WTC11 (cell line): ENCODE measurements at regions of chr18 and their contacts with region 1.

Region 1: GRCh38 chr18:37346048-37346447 is 219.6 kb downstream of the CELF4 start:
- DNase-seq: no peak
- ATAC-seq: peak; percentile 21; the same call in 1 of the 2 replicates
- H3K4me3 Mint-ChIP-seq: no peak overlapping the region
- H3K27ac Mint-ChIP-seq: no peak overlapping the region
- H3K4me1 Mint-ChIP-seq: peaks cover 31% of the 10 kb centered on the region
- H3K27me3 Mint-ChIP-seq: peaks cover 32% of the 10 kb centered on the region
- CTCF ChIP-seq: no peak

Region 2: DNA sequence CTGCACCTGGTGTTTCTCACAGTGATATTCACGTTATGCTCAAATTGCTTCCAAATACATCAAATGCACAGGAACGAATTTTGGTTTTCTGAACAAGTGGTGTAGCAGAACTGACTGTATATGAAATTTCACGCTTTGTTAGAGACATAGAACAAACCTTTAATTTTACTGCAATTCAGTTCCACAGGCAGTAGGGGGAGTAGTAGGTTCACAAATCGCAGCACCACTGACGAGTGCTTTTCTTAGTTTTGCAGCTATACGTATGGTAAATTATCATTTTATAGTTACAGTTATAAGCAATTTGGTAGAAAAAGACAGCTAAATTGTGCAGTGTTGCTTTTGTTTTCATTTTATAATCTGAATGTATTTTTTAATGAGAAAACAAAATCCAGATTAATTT is 403.8 kb before region 1 on chr18:
- CTCF ChIA-PET with region 1: interaction called, 10 read pairs
- POLR2A ChIA-PET with region 1: no interaction called
- DNase-seq: no peak
- ATAC-seq: peak; percentile 69
- H3K4me3 Mint-ChIP-seq: no peak overlapping the region
- H3K27ac Mint-ChIP-seq: no peak overlapping the region
- H3K4me1 Mint-ChIP-seq: peaks cover 32% of the 10 kb centered on the region
- H3K27me3 Mint-ChIP-seq: no peaks in the 10 kb centered on the region
- CTCF ChIP-seq: peak; percentile 73

Region 3: GRCh38 chr18:37322492-37323035 is 23.5 kb before region 1 on chr18:
- CTCF ChIA-PET with region 1: interaction called, 19 read pairs
- POLR2A ChIA-PET with region 1: no interaction called
- DNase-seq: peak; percentile 73
- ATAC-seq: peak; percentile 85
- H3K4me3 Mint-ChIP-seq: no peak overlapping the region
- H3K27ac Mint-ChIP-seq: no peak overlapping the region
- H3K4me1 Mint-ChIP-seq: peaks cover 10% of the 10 kb centered on the region
- H3K27me3 Mint-ChIP-seq: peaks cover 9% of the 10 kb centered on the region
- CTCF ChIP-seq: peak; percentile 84

Region 4: GRCh38 chr18:37361335-37362157 is 15.5 kb after region 1 on chr18:
- CTCF ChIA-PET with region 1: interaction called, 25 read pairs
- POLR2A ChIA-PET with region 1: no interaction called
- DNase-seq: no peak
- ATAC-seq: peak; percentile 50
- H3K4me3 Mint-ChIP-seq: peak overlapping the region; percentile 43
- H3K27ac Mint-ChIP-seq: no peak overlapping the region
- H3K4me1 Mint-ChIP-seq: peaks cover 26% of the 10 kb centered on the region
- H3K27me3 Mint-ChIP-seq: peaks cover 100% of the 10 kb centered on the region
- CTCF ChIP-seq: no peak

Region 5: DNA sequence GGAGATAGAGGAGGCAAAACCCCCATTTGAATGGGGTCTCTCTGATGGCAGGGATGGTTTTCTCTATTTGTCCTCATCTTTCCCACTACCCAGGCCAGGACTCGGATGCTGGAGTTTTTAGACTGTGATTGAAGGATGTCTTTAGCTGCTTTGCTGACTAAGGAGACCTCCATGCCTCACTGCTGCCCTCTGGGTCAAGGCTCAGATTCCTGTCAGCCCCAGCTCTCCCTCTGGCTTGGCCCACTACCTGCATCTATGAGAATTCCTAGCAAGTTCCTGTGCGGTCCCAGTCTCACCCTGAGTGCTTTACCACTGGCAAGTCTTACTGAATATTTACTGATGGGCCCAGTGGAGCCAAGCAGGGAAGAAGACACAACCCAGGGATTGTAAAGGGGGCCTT is 35.5 kb after region 1 on chr18:
- CTCF ChIA-PET with region 1: interaction called, 14 read pairs
- POLR2A ChIA-PET with region 1: no interaction called
- DNase-seq: peak; percentile 35
- ATAC-seq: peak; percentile 50
- H3K4me3 Mint-ChIP-seq: no peak overlapping the region
- H3K27ac Mint-ChIP-seq: no peak overlapping the region
- H3K4me1 Mint-ChIP-seq: peaks cover 24% of the 10 kb centered on the region
- H3K27me3 Mint-ChIP-seq: peaks cover 11% of the 10 kb centered on the region; the same call in 1 of the 2 replicates
- CTCF ChIP-seq: no peak

Region 6: GRCh38 chr18:37445368-37445767 is 99.3 kb after region 1 on chr18:
- CTCF ChIA-PET with region 1: interaction called, 6 read pairs
- POLR2A ChIA-PET with region 1: interaction called, 10 read pairs
- DNase-seq: no peak
- ATAC-seq: no peak
- H3K4me3 Mint-ChIP-seq: no peak overlapping the region
- H3K27ac Mint-ChIP-seq: no peak overlapping the region
- H3K4me1 Mint-ChIP-seq: peaks cover 41% of the 10 kb centered on the region
- H3K27me3 Mint-ChIP-seq: peaks cover 7% of the 10 kb centered on the region; the same call in 1 of the 2 replicates
- CTCF ChIP-seq: no peak

Region 7: DNA sequence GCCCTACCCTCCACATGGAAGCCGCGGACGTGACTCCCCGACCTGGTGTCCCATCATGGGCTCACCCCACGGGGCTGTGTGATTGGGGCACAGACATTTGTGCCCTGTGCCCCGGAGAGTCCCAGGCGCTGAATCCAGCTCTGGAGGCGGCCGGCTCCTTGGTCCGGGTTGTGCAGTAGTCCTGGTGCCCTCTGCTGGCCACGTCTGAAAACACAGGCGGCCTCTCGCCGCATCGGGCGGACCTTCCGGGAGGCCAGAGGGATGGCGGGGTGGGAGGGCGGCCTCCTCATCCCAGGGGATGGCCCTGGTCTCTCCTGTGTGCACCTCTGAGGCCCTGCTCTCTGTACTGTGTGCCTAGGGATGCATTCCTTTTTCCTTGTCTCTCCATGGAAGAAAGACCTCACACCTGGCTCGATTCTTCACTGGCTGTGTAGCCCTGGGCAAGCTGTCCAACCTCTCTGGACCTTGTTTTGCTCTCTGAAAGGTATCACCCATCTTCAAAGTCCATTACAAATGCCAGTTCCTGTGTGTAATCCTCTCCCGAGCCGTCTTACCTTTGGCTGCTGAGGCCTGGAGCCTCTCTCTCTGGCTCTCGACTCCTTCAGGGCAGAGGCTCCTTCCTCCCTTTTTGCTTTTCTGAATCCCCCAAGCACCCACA is 191.9 kb after region 1 on chr18:
- CTCF ChIA-PET with region 1: interaction called, 14 read pairs
- POLR2A ChIA-PET with region 1: no interaction called
- DNase-seq: peak; percentile 94
- ATAC-seq: peak; percentile 73
- H3K4me3 Mint-ChIP-seq: peak overlapping the region; percentile 60
- H3K27ac Mint-ChIP-seq: peak overlapping the region; percentile 2; the same call in 1 of the 2 replicates
- H3K4me1 Mint-ChIP-seq: peaks cover 46% of the 10 kb centered on the region
- H3K27me3 Mint-ChIP-seq: peaks cover 20% of the 10 kb centered on the region
- CTCF ChIP-seq: peak; percentile 79